ENCODE measurements at regions of chr17 and their contacts with region 1.

Region 1: GRCh38 chr17:77049440-77049839 is 91.3 kb upstream of the SEC14L1 start:
- DNase-seq: no peak
- H3K4me3 ChIP-seq: no peak overlapping the region
- H3K27ac ChIP-seq: no peak overlapping the region
- H3K4me1 ChIP-seq: peaks cover 0 to 3% of the 10 kb centered on the region in 2 experiments; a peak in 1 of 4 replicates
- H3K27me3 ChIP-seq: peaks cover 51% of the 10 kb centered on the region
- CTCF ChIP-seq: no peak
- EP300 ChIP-seq: no peak
- RAD21 ChIP-seq: no peak

Region 2: DNA sequence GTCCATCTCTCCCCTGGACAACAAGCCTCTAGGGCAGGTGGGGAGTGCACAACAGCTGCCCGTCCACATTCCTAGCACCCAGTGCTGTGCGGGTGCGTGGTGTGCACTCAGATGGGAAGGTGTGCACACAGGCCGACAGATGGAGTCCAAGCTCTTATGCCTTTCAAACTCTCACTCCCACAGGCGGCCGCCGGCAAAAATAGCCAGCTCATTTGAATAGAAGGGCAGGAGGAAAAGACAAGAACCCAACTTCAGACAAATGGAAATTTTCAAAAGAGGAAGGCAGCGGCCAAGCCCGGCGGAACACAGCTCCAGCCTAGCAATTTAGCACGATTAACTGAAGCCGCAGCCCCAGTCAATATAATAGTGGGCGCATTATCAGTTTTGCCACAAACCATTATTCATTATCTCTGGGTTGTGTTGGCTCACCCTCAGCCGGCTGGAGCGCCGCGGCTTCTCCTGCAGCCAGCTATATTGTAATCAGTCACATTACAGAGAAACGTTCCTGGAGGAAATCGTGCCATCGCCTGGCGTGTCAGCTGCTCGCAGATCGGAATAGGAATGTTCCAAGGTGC is 12.5 kb before region 1 on chr17:
- CTCF ChIA-PET with region 1: interaction called, 252 read pairs
- POLR2A ChIA-PET with region 1: no interaction called
- DNase-seq: peak; percentile 84
- H3K4me3 ChIP-seq: peak overlapping the region in 1 of 2 experiments; percentile 4; a peak in 1 of 4 replicates
- H3K27ac ChIP-seq: peak overlapping the region in 1 of 2 experiments; percentile 17; a peak in 1 of 4 replicates
- H3K4me1 ChIP-seq: peaks cover 0 to 16% of the 10 kb centered on the region in 2 experiments; a peak in 2 of 4 replicates
- H3K27me3 ChIP-seq: peaks cover 42% of the 10 kb centered on the region
- CTCF ChIP-seq: no peak
- EP300 ChIP-seq: peak in 1 of 2 experiments; percentile 32; a peak in 1 of 4 replicates
- RAD21 ChIP-seq: peak; percentile 35

Region 3: GRCh38 chr17:77164483-77165091 is 115.1 kb after region 1 on chr17:
- CTCF ChIA-PET with region 1: no interaction called
- POLR2A ChIA-PET with region 1: no interaction called
- DNase-seq: peak; percentile 50
- H3K4me3 ChIP-seq: no peak overlapping the region
- H3K27ac ChIP-seq: peak overlapping the region in 1 of 2 experiments; percentile 54; a peak in 2 of 4 replicates
- H3K4me1 ChIP-seq: peaks cover 20 to 27% of the 10 kb centered on the region in 2 experiments; a peak in 3 of 4 replicates
- H3K27me3 ChIP-seq: no peaks in the 10 kb centered on the region
- CTCF ChIP-seq: no peak
- EP300 ChIP-seq: no peak
- RAD21 ChIP-seq: no peak

Measured in SK-N-SH (cell line).